Lower leg skin (tissue), 4 donors: ENCODE measurements at regions of chr2 and their contacts with region 1.

Region 1: DNA sequence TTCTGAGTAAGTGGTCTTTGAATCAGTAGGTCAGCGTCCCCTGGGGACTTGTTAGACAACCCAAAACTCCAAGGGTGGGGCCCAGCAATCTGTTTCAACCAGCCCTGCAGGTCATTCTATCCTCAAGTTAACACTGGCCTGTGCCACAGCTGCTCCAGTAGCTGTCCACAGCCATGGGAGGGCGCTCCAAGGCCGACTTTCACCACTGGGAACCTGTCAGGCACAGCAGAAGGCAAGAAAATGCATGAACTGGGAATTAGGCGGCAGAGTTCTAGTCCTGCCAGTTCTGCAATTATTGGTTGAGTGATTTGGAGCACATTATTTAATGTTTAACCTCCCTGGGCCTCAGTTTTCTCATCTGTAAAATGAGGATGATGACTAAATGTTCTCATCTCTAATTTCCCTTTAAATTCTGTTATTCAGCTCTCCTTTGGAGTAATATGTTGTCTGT is 17.4 kb upstream of the MRPL33 start:
- DNase-seq: peak; percentile 66 to 93
- H3K4me3 ChIP-seq: no peak overlapping the region
- CTCF ChIP-seq: peak in 1 of 3 donors; percentile 78
- POLR2A ChIP-seq: no peak

Region 2: DNA sequence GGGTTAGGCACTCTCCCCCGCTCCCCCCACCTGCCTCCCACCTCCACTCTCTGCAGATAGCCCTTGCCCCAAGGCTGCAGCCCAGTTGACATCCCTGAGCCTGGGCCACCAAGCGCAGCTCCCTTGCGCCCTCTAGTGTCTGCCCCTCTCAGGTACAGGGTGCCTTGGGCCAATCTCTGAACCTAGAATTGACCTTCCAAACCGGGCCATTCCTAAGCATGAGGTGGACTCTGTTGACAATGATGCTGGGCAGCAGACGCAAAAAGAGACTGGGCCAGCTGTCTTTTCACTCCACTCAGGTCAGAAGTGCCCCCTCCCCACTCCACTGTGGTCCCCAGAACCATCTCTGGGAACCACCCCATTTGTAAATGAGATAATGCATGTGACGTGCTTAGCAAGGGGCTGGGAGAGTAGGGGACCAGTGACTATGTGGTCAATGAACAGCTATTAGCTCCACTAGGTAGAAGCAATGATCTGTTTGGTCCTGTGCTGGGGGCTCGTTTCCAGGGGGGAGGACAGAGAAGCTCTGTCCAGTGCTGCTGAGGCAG is 698.4 kb after region 1 on chr2:
- intact Hi-C with region 1: loop called (anchors 10 kb)
- DNase-seq: peak; percentile 60 to 94
- H3K4me3 ChIP-seq: no peak overlapping the region
- CTCF ChIP-seq: peak in 1 of 3 donors; percentile 66
- POLR2A ChIP-seq: no peak